Endothelial cell of umbilical vein (primary cell): ENCODE measurements at regions of chr2 and their contacts with region 1.

Region 1: GRCh38 chr2:241009601-241010530 is 11.4 kb downstream of the SNED1 start:
- DNase-seq: peak; percentile 77
- H3K4me3 ChIP-seq: peak overlapping the region in 1 of 3 experiments; percentile 3
- H3K27ac ChIP-seq: peak overlapping the region; percentile 58
- H3K4me1 ChIP-seq: peaks cover 22% of the 10 kb centered on the region
- H3K27me3 ChIP-seq: no peaks in the 10 kb centered on the region
- CTCF ChIP-seq: no peak
- POLR2A ChIP-seq: peak; percentile 58

Region 2: DNA sequence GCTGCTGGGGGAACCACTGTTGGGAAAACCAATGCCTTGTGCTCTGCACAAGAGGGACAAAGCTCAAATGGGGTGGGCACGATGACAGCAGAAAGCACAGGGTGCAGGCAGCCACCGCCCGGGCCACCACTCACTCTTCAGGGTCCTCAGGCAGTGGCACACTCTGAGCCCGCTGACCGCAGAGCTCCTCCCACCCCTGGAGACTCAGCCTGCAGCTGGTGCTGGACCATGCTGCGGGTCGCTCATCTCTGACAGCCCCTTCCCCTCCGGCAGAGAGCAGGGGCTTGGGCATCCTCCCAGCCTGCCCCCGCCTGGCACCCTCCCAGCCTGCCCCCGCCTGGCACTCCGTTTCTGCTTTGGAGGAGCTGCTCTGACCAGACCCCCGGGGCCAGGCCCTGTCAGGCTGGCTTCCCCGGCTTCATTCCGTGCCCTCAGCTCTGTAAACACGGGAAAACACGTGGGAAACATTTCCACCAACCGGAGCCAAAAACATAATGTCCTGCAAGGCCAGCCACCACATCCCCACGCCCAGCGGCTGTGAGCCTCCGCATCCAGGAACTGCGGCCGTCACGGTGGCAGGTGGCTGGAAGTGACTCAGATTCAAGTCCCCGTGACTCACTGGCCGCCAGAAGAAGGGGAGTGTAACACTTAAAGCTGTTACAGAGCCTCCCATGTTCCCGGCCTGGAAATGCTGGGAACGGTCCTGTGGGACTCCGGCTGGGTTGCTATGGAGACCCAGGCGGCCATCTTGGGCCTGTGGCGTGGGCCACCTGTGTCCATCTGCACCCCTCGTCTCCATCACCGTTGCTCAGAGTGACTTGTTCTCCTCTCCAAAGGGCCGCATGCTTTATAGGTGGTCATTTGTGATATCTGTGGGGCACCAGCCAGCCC is 18.2 kb before region 1 on chr2:
- CTCF ChIA-PET with region 1: interaction called, 18 read pairs
- POLR2A ChIA-PET with region 1: interaction called, 3 read pairs
- dilution Hi-C with region 1: no loop called
- intact Hi-C with region 1: loop called (anchors 1 kb)
- DNase-seq: peak; percentile 98
- H3K4me3 ChIP-seq: no peak overlapping the region
- H3K27ac ChIP-seq: peak overlapping the region; percentile 73
- H3K4me1 ChIP-seq: peaks cover 28% of the 10 kb centered on the region
- H3K27me3 ChIP-seq: no peaks in the 10 kb centered on the region
- CTCF ChIP-seq: no peak
- POLR2A ChIP-seq: no peak

Region 3: DNA sequence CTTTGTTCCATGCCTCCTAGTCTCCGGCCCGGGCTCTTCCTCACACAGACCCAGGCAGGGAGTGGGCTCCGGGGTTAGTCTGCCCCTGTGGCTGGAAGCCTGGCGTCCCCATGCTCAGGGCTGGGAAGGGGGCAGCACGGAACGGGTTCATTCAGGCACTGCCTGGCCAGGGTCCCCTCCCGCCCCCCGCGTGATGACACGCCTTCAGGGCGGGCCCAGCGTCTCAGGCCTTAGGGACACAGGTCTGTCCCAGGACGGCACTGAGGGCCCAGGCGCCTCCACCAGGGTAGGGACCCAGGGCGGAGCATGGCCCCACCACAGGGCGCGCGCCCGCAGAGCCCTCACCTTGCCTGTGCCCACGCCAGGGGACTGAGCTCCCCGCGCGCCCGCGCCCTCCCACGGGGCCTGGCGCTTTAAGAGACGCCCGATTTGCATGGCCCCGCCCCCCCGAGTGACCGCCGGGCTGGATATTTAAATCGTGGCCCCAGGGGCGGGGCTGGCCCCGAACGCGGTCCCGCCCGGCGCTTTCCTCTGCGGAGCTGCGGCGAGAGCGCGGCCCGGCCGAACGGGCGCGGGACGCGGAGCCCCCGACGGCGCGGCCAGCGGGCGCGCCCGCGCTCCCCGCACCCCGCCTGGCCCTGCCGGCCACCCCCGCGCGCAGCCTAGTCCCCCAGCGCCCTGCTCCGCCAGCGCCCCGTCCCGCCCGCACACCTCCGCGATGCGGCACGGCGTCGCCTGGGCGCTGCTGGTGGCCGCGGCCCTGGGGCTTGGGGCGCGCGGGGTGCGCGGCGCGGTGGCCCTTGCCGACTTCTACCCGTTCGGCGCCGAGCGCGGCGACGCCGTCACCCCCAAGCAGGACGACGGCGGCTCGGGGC is 11.5 kb before region 1 on chr2 and contains the start of gene SNED1:
- CTCF ChIA-PET with region 1: interaction called, 13 read pairs
- POLR2A ChIA-PET with region 1: interaction called, 8 read pairs
- dilution Hi-C with region 1: no loop called
- intact Hi-C with region 1: loop called (anchors 1 kb)
- DNase-seq: peak; percentile 93
- H3K4me3 ChIP-seq: peak within 1 kb of the TSS; percentile 42 to 46 (median 42)
- H3K27ac ChIP-seq: peak within 1 kb of the TSS; percentile 80
- H3K4me1 ChIP-seq: peaks cover 12% of the 10 kb centered on the region
- H3K27me3 ChIP-seq: no peaks in the 10 kb centered on the region
- CTCF ChIP-seq: no peak
- POLR2A ChIP-seq: peak; percentile 68
- total RNA-seq, gene SNED1: 17.2 and 22.1 TPM in 2 replicates